IMR-90 (cell line): ENCODE measurements at regions of chr21 and their contacts with region 1.

Region 1: DNA sequence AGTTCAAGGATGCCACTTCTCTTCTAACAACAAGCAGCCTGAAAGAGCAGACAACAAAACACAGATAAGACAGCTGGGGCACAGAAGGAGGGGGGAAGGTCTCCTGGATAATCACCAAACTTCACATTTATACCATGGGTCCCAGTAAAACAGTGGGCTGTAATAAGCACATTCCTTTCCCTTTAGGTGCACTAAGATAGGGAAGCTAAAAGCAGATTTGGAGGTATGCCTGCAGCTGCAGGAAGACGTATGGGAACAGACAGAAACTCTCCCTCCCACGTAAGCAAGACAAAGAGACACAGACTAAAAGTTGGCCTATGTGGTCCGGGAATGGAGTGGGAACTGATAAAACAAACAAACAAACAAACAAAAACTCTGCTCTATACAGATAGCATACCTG is 612.1 kb downstream of the MRPL39 start:
- DNase-seq: no peak
- ATAC-seq: no peak
- H3K4me3 ChIP-seq: no peak overlapping the region
- H3K27ac ChIP-seq: no peak overlapping the region
- H3K4me1 ChIP-seq: no peaks in the 10 kb centered on the region
- H3K27me3 ChIP-seq: no peaks in the 10 kb centered on the region
- CTCF ChIP-seq: no peak
- POLR2A ChIP-seq: no peak
- RAD21 ChIP-seq: no peak

Region 2: GRCh38 chr21:24941316-24942185 is 53.7 kb before region 1 on chr21:
- CTCF ChIA-PET with region 1: no interaction called
- POLR2A ChIA-PET with region 1: no interaction called
- dilution Hi-C with region 1: no loop called
- in situ Hi-C with region 1: no loop called
- intact Hi-C with region 1: no loop called
- DNase-seq: no peak
- ATAC-seq: no peak
- H3K4me3 ChIP-seq: no peak overlapping the region
- H3K27ac ChIP-seq: no peak overlapping the region
- H3K4me1 ChIP-seq: no peaks in the 10 kb centered on the region
- H3K27me3 ChIP-seq: no peaks in the 10 kb centered on the region
- CTCF ChIP-seq: no peak
- POLR2A ChIP-seq: no peak
- RAD21 ChIP-seq: no peak

Region 3: DNA sequence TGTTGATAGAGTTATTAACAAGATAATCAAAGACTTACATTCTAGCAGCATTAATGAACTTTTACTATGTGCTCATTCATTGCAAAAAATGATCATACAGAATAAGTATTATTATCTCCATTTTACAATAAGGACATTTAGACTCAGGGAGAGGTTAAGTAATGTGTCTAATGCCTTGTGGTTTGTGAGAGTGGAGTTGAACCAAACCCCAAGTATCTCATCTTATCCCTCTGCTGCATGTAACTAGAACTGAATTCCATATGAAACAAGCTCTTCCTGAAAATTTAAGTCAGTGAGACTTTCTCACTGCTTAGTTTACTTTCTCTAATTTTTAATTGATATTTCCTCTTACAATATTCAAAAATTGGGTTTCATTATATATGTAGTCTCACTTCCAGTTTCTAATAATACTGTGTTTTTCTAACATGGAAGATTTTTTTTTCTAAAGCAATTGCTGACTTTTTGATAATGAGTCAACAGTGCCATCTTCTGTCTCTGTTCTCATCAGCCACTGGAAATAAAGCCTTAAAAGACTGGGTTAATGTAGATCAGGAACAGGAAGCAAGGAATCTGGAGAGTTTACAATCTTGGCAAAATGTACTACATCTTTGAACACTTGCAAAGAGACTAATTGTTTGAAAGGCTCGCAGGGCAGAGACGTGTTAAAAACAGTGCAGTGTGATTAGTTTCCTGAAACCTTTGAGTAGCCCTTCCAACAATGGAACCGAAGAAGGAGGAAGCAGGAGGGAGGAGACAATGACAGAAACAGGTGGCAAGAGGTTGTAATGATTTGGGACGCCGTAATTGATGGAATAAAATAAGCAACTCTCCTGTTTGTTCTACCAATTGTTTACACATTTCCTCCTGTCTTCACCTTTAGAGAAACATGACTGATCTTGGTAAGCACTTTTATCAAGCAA is 44.5 kb after region 1 on chr21:
- CTCF ChIA-PET with region 1: no interaction called
- POLR2A ChIA-PET with region 1: no interaction called
- dilution Hi-C with region 1: no loop called
- in situ Hi-C with region 1: no loop called
- intact Hi-C with region 1: loop called (anchors 1 kb)
- DNase-seq: peak; percentile 5
- ATAC-seq: 0 out of 2 replicates have a peak, but pooled peaks have one; percentile 17
- H3K4me3 ChIP-seq: no peak overlapping the region
- H3K27ac ChIP-seq: no peak overlapping the region
- H3K4me1 ChIP-seq: no peaks in the 10 kb centered on the region
- H3K27me3 ChIP-seq: no peaks in the 10 kb centered on the region
- CTCF ChIP-seq: peak; percentile 18; the same call in 1 of the 2 replicates
- POLR2A ChIP-seq: no peak
- RAD21 ChIP-seq: no peak